CD4-positive, alpha-beta memory T cell (primary cell): ENCODE measurements at regions of chr1 and their contacts with region 1.

Region 1: DNA sequence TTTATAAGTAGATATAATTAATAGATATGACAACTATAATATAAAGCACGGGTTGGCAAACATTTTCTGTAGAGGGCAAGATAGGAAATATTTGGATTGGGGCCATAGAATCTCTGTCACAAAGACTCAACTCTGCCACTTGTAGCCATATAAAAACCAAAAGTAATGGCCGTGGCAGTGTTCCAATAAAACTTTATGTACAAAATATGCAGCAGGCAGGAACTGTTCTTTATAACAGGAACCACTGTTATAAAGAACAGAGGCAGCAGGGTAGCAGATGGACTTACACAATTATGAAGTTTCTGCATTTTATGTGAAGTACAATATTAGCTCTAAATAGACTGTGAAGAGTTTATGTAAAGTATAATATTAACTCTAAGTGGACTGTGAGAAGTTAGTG is 16.9 kb upstream of the QSOX1 start:
- DNase-seq: no peak
- H3K4me3 ChIP-seq: no peak overlapping the region
- H3K4me3 Mint-ChIP-seq: no peak overlapping the region
- H3K27ac ChIP-seq: no peak overlapping the region
- H3K27ac Mint-ChIP-seq: no peak overlapping the region
- H3K4me1 ChIP-seq: no peaks in the 10 kb centered on the region
- H3K4me1 Mint-ChIP-seq: no peaks in the 10 kb centered on the region
- H3K27me3 ChIP-seq: no peaks in the 10 kb centered on the region
- H3K27me3 Mint-ChIP-seq: peaks cover 9 to 19% of the 10 kb centered on the region in 2 donors

Region 2: GRCh38 chr1:180154325-180155181 is 16.8 kb after region 1 on chr1 and contains the start of gene QSOX1:
- CTCF ChIA-PET with region 1: no interaction called
- POLR2A ChIA-PET with region 1: no interaction called
- intact Hi-C with region 1: loop called (anchors 2 kb)
- DNase-seq: peak; percentile 88 to 91 (median 89)
- H3K4me3 ChIP-seq: peak within 1 kb of the TSS; percentile 87 to 94
- H3K4me3 Mint-ChIP-seq: peak within 1 kb of the TSS; percentile 89 to 94 (median 92)
- H3K27ac ChIP-seq: peak within 1 kb of the TSS; percentile 68
- H3K27ac Mint-ChIP-seq: peak within 1 kb of the TSS; percentile 85 to 94 (median 92)
- H3K4me1 ChIP-seq: peaks cover 27% of the 10 kb centered on the region
- H3K4me1 Mint-ChIP-seq: peaks cover 14 to 52% (median 34%) of the 10 kb centered on the region in 4 donors
- H3K27me3 ChIP-seq: no peaks in the 10 kb centered on the region
- H3K27me3 Mint-ChIP-seq: no peaks in the 10 kb centered on the region
- total RNA-seq, gene QSOX1: 19.1 to 25.1 TPM